HAP-1 (cell line): ENCODE measurements at regions of chr2 and their contacts with region 1.

Region 1: GRCh38 chr2:54115284-54116137 is at the start of gene ACYP2:
- DNase-seq: peak; percentile 90 to 98
- H3K4me3 ChIP-seq: peak within 1 kb of the TSS; percentile 66
- H3K4me1 ChIP-seq: no peaks in the 10 kb centered on the region
- H3K27me3 ChIP-seq: no peaks in the 10 kb centered on the region

Region 2: GRCh38 chr2:54665436-54665856 is 549.9 kb after region 1 on chr2:
- in situ Hi-C with region 1: loop called (anchors 25 kb)
- DNase-seq: peak; percentile 76 to 82
- H3K4me3 ChIP-seq: no peak overlapping the region
- H3K4me1 ChIP-seq: peaks cover 10% of the 10 kb centered on the region
- H3K27me3 ChIP-seq: no peaks in the 10 kb centered on the region

Region 3: GRCh38 chr2:54704688-54705605 is 589.4 kb after region 1 on chr2:
- in situ Hi-C with region 1: loop called (anchors 10 kb)
- DNase-seq: peak in 1 of 2 experiments; percentile 45
- H3K4me3 ChIP-seq: no peak overlapping the region
- H3K4me1 ChIP-seq: no peaks in the 10 kb centered on the region
- H3K27me3 ChIP-seq: no peaks in the 10 kb centered on the region

Region 4: GRCh38 chr2:54838585-54839035 is 723.1 kb after region 1 on chr2:
- in situ Hi-C with region 1: loop called (anchors 25 kb)
- DNase-seq: peak; percentile 60 to 82
- H3K4me3 ChIP-seq: no peak overlapping the region
- H3K4me1 ChIP-seq: no peaks in the 10 kb centered on the region
- H3K27me3 ChIP-seq: no peaks in the 10 kb centered on the region

Region 5: GRCh38 chr2:54927085-54927750 is 811.7 kb after region 1 on chr2:
- in situ Hi-C with region 1: no loop called
- DNase-seq: no peak
- H3K4me3 ChIP-seq: no peak overlapping the region
- H3K4me1 ChIP-seq: no peaks in the 10 kb centered on the region
- H3K27me3 ChIP-seq: no peaks in the 10 kb centered on the region